ENCODE measurements at regions of chr2 and their contacts with region 1.

Region 1: DNA sequence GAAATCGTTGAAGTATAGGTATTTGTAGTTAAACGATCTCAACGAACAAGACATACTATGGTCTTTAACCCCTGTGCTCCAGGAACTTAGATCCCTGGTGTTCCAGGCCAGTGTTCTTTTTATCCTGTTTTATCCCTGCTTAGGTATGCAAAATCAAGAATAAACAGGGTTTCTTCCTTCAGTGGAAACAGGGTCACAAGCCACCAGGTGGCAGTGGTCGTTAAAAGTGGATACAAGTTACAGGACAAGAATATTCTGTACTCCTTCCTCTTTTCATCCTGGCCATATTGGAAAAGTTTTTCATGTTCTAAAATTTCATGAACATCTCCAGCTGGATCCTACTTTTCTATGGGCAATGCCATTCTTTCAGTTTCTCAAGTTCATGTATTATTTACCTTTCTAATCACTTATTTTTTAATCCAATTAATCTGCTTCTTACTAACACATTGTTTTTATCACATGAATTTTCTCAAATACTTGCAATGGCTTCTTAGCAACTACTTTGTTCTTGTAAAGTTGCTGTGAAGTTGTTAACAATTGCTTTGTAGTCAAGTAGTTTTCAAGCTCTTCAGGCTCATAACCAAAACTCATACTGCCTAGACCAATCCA is 16.4 kb upstream of the HNMT start:
- DNase-seq: peak; percentile 79
- ATAC-seq: no peak
- H3K4me3 ChIP-seq: no peak overlapping the region
- H3K27ac ChIP-seq: peak overlapping the region; percentile 11
- H3K4me1 ChIP-seq: peaks cover 66% of the 10 kb centered on the region
- H3K27me3 ChIP-seq: no peaks in the 10 kb centered on the region
- CTCF ChIP-seq: peak; percentile 65
- EP300 ChIP-seq: no peak
- POLR2A ChIP-seq: no peak
- RAD21 ChIP-seq: peak; percentile 89

Region 2: DNA sequence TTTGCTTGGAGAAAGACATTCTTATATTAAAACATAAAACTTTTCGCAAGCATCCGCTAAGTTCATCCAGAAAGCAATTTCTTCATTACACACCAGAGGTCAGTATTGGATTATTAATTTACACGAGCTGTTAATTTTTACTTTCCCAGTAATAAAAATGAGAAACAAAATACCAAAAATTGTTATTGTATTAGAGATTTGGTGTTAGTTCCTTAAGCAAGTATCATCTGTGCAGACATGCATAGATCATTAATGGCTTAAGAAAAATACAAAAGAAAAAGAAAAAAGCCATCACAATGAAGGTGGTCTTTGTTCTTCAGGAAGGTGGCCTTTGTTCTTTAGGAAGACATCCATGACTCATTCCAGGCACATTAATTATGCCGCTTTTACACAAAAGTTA is 37.2 kb before region 1 on chr2:
- CTCF ChIA-PET with region 1: no interaction called
- POLR2A ChIA-PET with region 1: interaction called, 14 read pairs
- in situ Hi-C with region 1: no loop called
- intact Hi-C with region 1: loop called (anchors 1 kb)
- DNase-seq: peak; percentile 55
- ATAC-seq: no peak
- H3K4me3 ChIP-seq: no peak overlapping the region
- H3K27ac ChIP-seq: no peak overlapping the region
- H3K4me1 ChIP-seq: peaks cover 42% of the 10 kb centered on the region
- H3K27me3 ChIP-seq: no peaks in the 10 kb centered on the region
- CTCF ChIP-seq: peak; percentile 66
- EP300 ChIP-seq: peak in 1 of 2 experiments; percentile 30; a peak in 1 of 4 replicates
- POLR2A ChIP-seq: no peak
- RAD21 ChIP-seq: peak; percentile 84

Region 3: DNA sequence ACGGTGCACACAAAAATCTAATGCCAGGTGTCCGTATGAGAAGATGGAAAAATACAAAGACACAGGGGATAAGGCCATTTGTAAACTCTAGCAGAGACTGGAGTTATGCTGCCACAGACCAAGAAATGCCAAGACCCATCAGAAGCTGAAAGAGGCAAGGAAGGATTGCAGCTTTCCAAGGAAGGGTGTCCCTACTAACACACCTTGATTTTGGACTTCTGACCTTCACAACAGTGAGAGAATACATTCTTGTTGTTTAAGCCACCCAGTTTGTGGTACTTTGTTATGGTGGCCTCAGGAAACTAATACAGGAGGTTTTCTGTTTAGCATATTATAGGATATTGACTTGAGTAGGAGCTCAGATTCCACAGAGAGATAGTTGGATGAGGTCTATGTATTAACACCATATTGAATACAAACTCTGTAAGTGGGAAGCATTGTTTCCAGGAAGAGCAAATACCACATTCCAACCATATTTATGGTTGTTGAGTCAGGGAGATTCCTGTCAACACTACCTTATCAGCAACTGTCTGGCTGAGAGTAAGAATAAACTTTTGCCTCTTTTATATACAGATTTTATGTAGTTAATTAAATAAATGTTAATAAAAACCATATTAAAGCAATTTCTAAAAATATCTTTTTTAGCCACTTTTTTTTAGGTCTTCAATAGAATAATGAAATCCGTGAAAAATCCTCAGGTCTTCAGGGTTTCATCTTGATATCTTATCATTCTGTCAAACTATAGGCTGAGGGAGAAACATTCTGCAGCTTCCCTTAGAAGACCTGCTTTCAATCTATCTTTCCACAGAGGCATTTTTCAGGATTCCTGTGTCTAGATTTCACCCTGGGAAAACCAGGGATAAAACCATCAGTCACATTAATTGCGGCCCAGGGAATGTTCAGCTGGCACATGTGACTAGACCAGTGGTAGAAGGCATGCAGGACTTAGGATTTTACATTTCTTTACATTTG is 19.0 kb before region 1 on chr2:
- CTCF ChIA-PET with region 1: no interaction called
- POLR2A ChIA-PET with region 1: interaction called, 52 read pairs
- in situ Hi-C with region 1: no loop called
- intact Hi-C with region 1: loop called (anchors 1 kb)
- DNase-seq: peak; percentile 98
- ATAC-seq: peak; percentile 96
- H3K4me3 ChIP-seq: peak overlapping the region in 1 of 3 experiments; percentile 26; a peak in 1 of 6 replicates
- H3K27ac ChIP-seq: peak overlapping the region; percentile 81
- H3K4me1 ChIP-seq: peaks cover 78% of the 10 kb centered on the region
- H3K27me3 ChIP-seq: no peaks in the 10 kb centered on the region
- CTCF ChIP-seq: no peak
- EP300 ChIP-seq: peak; percentile 56 to 96; a peak in 3 of 4 replicates
- POLR2A ChIP-seq: no peak
- RAD21 ChIP-seq: no peak

Region 4: GRCh38 chr2:137969418-137969765 is 21.6 kb after region 1 on chr2:
- CTCF ChIA-PET with region 1: no interaction called
- POLR2A ChIA-PET with region 1: interaction called, 733 read pairs
- in situ Hi-C with region 1: no loop called
- intact Hi-C with region 1: loop called (anchors 1 kb)
- DNase-seq: no peak
- ATAC-seq: no peak
- H3K4me3 ChIP-seq: peak overlapping the region; percentile 11 to 85 (median 82); a peak in 3 of 6 replicates
- H3K27ac ChIP-seq: peak overlapping the region; percentile 100
- H3K4me1 ChIP-seq: peaks cover 76% of the 10 kb centered on the region
- H3K27me3 ChIP-seq: no peaks in the 10 kb centered on the region; a peak in 2 of 5 replicates
- CTCF ChIP-seq: no peak
- EP300 ChIP-seq: no peak
- POLR2A ChIP-seq: no peak
- RAD21 ChIP-seq: no peak

Region 5: GRCh38 chr2:137975280-137976265 is 27.7 kb after region 1 on chr2:
- CTCF ChIA-PET with region 1: interaction called, 3 read pairs
- POLR2A ChIA-PET with region 1: interaction called, 19 read pairs
- in situ Hi-C with region 1: no loop called
- intact Hi-C with region 1: no loop called
- DNase-seq: peak; percentile 73
- ATAC-seq: peak; percentile 89
- H3K4me3 ChIP-seq: peak overlapping the region in 1 of 3 experiments; percentile 1; a peak in 2 of 6 replicates
- H3K27ac ChIP-seq: peak overlapping the region; percentile 71
- H3K4me1 ChIP-seq: peaks cover 76% of the 10 kb centered on the region
- H3K27me3 ChIP-seq: no peaks in the 10 kb centered on the region
- CTCF ChIP-seq: no peak
- EP300 ChIP-seq: no peak
- POLR2A ChIP-seq: 0 out of 4 replicates have a peak, but pooled peaks of 1 of the 2 experiments have one; percentile 1
- RAD21 ChIP-seq: 0 out of 2 replicates have a peak, but pooled peaks have one; percentile 12

Region 6: GRCh38 chr2:137986268-137986667 is 38.4 kb after region 1 on chr2:
- CTCF ChIA-PET with region 1: no interaction called
- POLR2A ChIA-PET with region 1: no interaction called
- in situ Hi-C with region 1: no loop called
- intact Hi-C with region 1: no loop called
- DNase-seq: no peak
- ATAC-seq: no peak
- H3K4me3 ChIP-seq: no peak overlapping the region
- H3K27ac ChIP-seq: no peak overlapping the region
- H3K4me1 ChIP-seq: peaks cover 30% of the 10 kb centered on the region
- H3K27me3 ChIP-seq: no peaks in the 10 kb centered on the region
- CTCF ChIP-seq: no peak
- EP300 ChIP-seq: no peak
- POLR2A ChIP-seq: no peak; a peak in 1 of 4 replicates
- RAD21 ChIP-seq: no peak

Region 7: DNA sequence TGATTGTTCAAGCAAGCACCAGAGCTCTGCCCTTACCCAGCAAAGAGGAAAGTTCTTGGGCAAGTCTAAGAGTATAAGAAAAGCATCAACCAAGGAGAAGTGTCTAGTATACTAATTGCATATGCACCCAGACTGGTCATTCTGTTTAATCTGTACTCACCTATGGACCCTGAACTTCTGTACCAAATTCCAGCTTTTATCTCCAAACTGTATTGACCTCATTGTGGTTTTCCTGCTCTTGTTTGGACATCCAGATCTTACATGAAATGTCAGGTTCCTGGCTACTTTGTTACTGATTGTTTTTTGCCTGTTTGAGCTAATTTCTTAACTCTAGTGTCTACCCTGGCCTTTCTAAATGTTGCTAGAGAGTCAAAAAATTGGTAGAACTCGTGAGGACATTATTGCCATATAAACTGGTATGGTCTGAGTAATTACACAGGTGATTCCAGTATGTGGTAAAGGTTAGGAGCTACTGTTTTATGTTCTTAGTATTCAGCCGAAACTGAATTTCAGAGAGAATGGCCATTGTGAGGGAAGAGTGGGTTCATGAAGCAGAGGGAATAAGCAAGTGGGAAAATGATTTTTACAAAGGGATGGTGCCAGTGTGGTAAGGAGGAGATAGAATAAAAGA is 162.7 kb after region 1 on chr2:
- CTCF ChIA-PET with region 1: no interaction called
- POLR2A ChIA-PET with region 1: interaction called, 11 read pairs
- in situ Hi-C with region 1: no loop called
- intact Hi-C with region 1: no loop called
- DNase-seq: peak; percentile 96
- ATAC-seq: peak; percentile 91
- H3K4me3 ChIP-seq: peak overlapping the region in 1 of 3 experiments; percentile 6; a peak in 1 of 6 replicates
- H3K27ac ChIP-seq: peak overlapping the region; percentile 72
- H3K4me1 ChIP-seq: peaks cover 62% of the 10 kb centered on the region
- H3K27me3 ChIP-seq: no peaks in the 10 kb centered on the region
- CTCF ChIP-seq: no peak
- EP300 ChIP-seq: peak; percentile 93 to 99
- POLR2A ChIP-seq: no peak
- RAD21 ChIP-seq: no peak

Region 8: GRCh38 chr2:138752197-138752956 is 804.5 kb after region 1 on chr2:
- CTCF ChIA-PET with region 1: no interaction called
- POLR2A ChIA-PET with region 1: no interaction called
- in situ Hi-C with region 1: no loop called
- intact Hi-C with region 1: no loop called
- DNase-seq: no peak
- ATAC-seq: no peak
- H3K4me3 ChIP-seq: no peak overlapping the region
- H3K27ac ChIP-seq: no peak overlapping the region
- H3K4me1 ChIP-seq: no peaks in the 10 kb centered on the region
- H3K27me3 ChIP-seq: 0 out of 5 replicates have a peak, but pooled peaks cover 0 to 2% of the 10 kb centered on the region in 2 experiments
- CTCF ChIP-seq: no peak
- EP300 ChIP-seq: no peak
- POLR2A ChIP-seq: no peak
- RAD21 ChIP-seq: no peak

Region 9: GRCh38 chr2:138787053-138787666 is 839.3 kb after region 1 on chr2:
- CTCF ChIA-PET with region 1: no interaction called
- POLR2A ChIA-PET with region 1: no interaction called
- in situ Hi-C with region 1: no loop called
- intact Hi-C with region 1: loop called (anchors 1 kb)
- DNase-seq: peak; percentile 44
- ATAC-seq: peak; percentile 66
- H3K4me3 ChIP-seq: no peak overlapping the region
- H3K27ac ChIP-seq: no peak overlapping the region
- H3K4me1 ChIP-seq: no peaks in the 10 kb centered on the region
- H3K27me3 ChIP-seq: peaks cover 0 to 23% of the 10 kb centered on the region in 2 experiments; a peak in 2 of 5 replicates
- CTCF ChIP-seq: peak; percentile 79
- EP300 ChIP-seq: no peak
- POLR2A ChIP-seq: no peak
- RAD21 ChIP-seq: peak; percentile 56